B cell (primary cell): ENCODE measurements at regions of chr10 and their contacts with region 1.

Region 1: GRCh38 chr10:92816091-92816531 is 32.2 kb upstream of the EXOC6 start:
- DNase-seq: no peak
- ATAC-seq: no peak
- H3K4me3 ChIP-seq: no peak overlapping the region
- H3K4me3 Mint-ChIP-seq: no peak overlapping the region
- H3K27ac ChIP-seq: no peak overlapping the region
- H3K27ac Mint-ChIP-seq: no peak overlapping the region
- H3K4me1 ChIP-seq: peaks cover 0 to 8% of the 10 kb centered on the region in 2 donors
- H3K4me1 Mint-ChIP-seq: peaks cover 7% of the 10 kb centered on the region
- H3K27me3 ChIP-seq: peaks cover 0 to 6% (median 0%) of the 10 kb centered on the region in 4 experiments
- H3K27me3 Mint-ChIP-seq: peaks cover 4% of the 10 kb centered on the region
- CTCF ChIP-seq: no peak

Region 2: DNA sequence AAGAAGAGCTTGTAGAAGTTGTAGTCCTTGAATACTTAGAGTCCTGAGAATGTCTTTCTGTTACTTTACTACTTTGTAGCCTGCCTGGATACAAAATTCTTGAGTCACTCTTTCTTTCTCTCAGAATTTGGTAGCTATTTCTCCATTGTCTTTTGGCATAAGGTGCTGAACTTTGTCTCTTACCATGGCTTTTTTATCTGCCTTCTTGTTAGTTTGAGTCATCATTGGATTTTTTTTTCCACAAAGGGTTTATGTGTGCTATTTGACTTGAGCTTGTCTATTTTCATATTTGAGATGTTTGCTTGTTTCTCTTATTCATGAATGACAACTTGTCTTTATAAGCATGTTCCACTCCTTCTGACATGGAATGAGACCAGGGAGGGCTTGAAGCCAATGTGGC is 42.3 kb before region 1 on chr10:
- CTCF ChIA-PET with region 1: no interaction called
- POLR2A ChIA-PET with region 1: no interaction called
- intact Hi-C with region 1: loop called (anchors 5 kb)
- DNase-seq: no peak
- ATAC-seq: no peak
- H3K4me3 ChIP-seq: no peak overlapping the region
- H3K4me3 Mint-ChIP-seq: no peak overlapping the region
- H3K27ac ChIP-seq: no peak overlapping the region
- H3K27ac Mint-ChIP-seq: no peak overlapping the region
- H3K4me1 ChIP-seq: peaks cover 0 to 5% of the 10 kb centered on the region in 2 donors
- H3K4me1 Mint-ChIP-seq: peaks cover 6% of the 10 kb centered on the region
- H3K27me3 ChIP-seq: no peaks in the 10 kb centered on the region
- H3K27me3 Mint-ChIP-seq: no peaks in the 10 kb centered on the region
- CTCF ChIP-seq: no peak